Aorta (tissue), 5 donors: ENCODE measurements at regions of chr1 and their contacts with region 1.

Region 1: DNA sequence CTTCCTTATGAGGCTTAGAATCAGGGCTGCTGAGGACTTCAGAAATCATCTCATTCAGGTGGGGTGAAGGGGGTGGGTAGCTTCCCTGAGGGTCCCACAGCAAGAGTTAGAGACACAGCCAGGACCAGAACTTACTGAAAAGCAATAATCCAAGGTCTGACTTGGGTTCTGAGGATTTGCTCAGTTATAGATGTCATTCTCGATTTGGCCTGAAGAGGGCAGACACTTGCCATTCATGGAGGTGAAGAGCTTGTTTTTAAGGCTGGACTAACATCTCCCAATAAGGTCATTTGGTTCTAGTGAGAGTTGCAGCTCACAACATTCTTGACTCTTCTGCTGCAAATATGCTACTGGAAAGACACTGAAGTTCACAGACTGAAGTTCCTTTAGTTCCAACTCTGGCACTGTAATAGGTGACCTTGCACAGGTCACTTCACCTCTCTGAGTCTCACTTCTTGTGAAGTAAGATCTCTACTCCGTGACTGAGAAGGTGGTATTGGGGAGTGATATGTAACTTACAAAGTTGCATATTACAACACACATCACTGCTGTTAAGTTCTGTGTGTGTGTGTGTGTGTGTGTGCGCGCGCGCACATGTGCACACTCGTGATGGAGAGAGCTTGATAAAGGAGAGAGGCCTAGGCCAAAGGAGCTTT is 69.8 kb upstream of the DIRAS3 start:
- DNase-seq: no peak
- ATAC-seq: peak; percentile 93
- H3K4me3 ChIP-seq: no peak overlapping the region
- H3K27ac ChIP-seq: no peak overlapping the region
- H3K4me1 ChIP-seq: no peaks in the 10 kb centered on the region
- H3K27me3 ChIP-seq: no peaks in the 10 kb centered on the region

Region 2: GRCh38 chr1:68269637-68270426 is 149.6 kb after region 1 on chr1:
- intact Hi-C with region 1: no loop called
- DNase-seq: no peak
- ATAC-seq: no peak
- H3K4me3 ChIP-seq: no peak overlapping the region
- H3K27ac ChIP-seq: no peak overlapping the region
- H3K4me1 ChIP-seq: no peaks in the 10 kb centered on the region
- H3K27me3 ChIP-seq: no peaks in the 10 kb centered on the region

Region 3: GRCh38 chr1:68321084-68321685 is 200.9 kb after region 1 on chr1:
- intact Hi-C with region 1: loop called (anchors 2 to 5 kb)
- DNase-seq: peak; percentile 76 to 88
- ATAC-seq: peak; percentile 84
- H3K4me3 ChIP-seq: no peak overlapping the region
- H3K27ac ChIP-seq: no peak overlapping the region
- H3K4me1 ChIP-seq: no peaks in the 10 kb centered on the region
- H3K27me3 ChIP-seq: no peaks in the 10 kb centered on the region

Region 4: DNA sequence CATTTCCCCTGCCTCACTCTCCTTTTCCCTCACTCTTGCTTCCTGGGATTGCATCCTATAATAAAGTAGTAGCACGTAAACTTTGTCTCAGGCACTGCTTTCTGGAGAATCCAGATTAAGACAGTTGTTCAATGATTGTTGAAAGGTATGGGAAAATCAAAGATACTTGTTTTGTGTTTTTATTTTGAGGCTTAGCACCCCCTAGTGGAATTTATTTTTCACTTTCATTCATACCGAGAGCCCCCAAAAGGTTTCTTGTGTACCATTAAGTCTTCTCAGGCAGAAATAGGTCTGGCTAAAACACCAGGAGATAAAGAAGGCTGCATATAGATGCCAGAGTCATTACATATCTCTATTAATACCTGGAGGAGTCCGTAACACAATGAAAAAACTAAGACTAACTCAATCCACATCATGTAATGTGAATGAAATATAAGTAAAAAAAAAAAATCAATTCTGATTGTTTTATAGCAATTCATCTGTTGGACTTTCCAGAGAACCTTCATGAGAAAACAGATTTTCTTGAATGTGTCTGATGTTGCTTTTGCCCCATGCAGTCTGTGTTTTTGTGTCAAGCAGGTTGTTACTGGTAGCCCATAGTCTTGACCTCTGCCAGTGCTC is 226.0 kb after region 1 on chr1:
- intact Hi-C with region 1: loop called (anchors 1 to 2 kb)
- DNase-seq: no peak
- ATAC-seq: no peak
- H3K4me3 ChIP-seq: no peak overlapping the region
- H3K27ac ChIP-seq: no peak overlapping the region
- H3K4me1 ChIP-seq: no peaks in the 10 kb centered on the region
- H3K27me3 ChIP-seq: no peaks in the 10 kb centered on the region

Region 5: GRCh38 chr1:68442822-68443556 is 322.7 kb after region 1 on chr1:
- intact Hi-C with region 1: loop called (anchors 5 kb)
- DNase-seq: no peak
- ATAC-seq: no peak
- H3K4me3 ChIP-seq: no peak overlapping the region
- H3K27ac ChIP-seq: no peak overlapping the region
- H3K4me1 ChIP-seq: no peaks in the 10 kb centered on the region
- H3K27me3 ChIP-seq: no peaks in the 10 kb centered on the region